PC-9 (cell line): ENCODE measurements at regions of chrX and their contacts with region 1.

Region 1: GRCh38 chrX:150982788-150983520 is at the start of gene HMGB3:
- DNase-seq: peak; percentile 94
- H3K4me3 ChIP-seq: peak within 1 kb of the TSS; percentile 95
- H3K27ac ChIP-seq: no peak within 1 kb of the TSS
- H3K4me1 ChIP-seq: peaks cover 6% of the 10 kb centered on the region
- H3K27me3 ChIP-seq: no peaks in the 10 kb centered on the region
- CTCF ChIP-seq: no peak
- total RNA-seq, gene HMGB3: 133 and 149 TPM in 2 replicates

Region 2: GRCh38 chrX:150568320-150569154 is 414.4 kb before region 1 on chrX and contains the start of gene MTM1:
- CTCF ChIA-PET with region 1: no interaction called
- POLR2A ChIA-PET with region 1: no interaction called
- intact Hi-C with region 1: loop called (anchors 5 kb)
- DNase-seq: peak; percentile 98
- H3K4me3 ChIP-seq: peak within 1 kb of the TSS; percentile 79
- H3K27ac ChIP-seq: no peak within 1 kb of the TSS
- H3K4me1 ChIP-seq: peaks cover 50% of the 10 kb centered on the region
- H3K27me3 ChIP-seq: no peaks in the 10 kb centered on the region
- CTCF ChIP-seq: no peak
- total RNA-seq, gene MTM1: 17.4 and 22.9 TPM in 2 replicates

Region 3: DNA sequence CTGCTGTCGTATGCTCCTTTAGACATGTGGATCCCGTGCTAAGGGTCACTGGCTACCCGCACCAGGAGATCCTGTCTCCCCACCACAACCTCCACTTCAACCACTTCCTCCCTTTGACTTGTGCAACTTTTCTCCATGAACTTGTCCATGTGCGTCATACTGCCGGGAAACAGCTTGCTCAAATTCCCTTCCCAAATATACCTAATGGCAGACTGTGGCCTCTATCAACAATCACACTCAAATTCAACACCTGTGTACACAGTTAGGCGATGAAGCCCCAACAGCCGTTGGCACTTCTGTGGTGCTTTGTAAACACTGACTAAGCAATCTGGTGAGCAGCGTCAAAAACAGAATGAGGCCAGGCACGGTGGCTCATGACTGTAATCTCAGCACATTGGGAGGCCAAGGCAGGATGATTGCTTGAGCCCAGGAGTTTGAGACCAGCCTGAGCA is 134.0 kb before region 1 on chrX:
- CTCF ChIA-PET with region 1: no interaction called
- POLR2A ChIA-PET with region 1: no interaction called
- intact Hi-C with region 1: loop called (anchors 2 kb)
- DNase-seq: peak; percentile 39 to 63
- H3K4me3 ChIP-seq: no peak overlapping the region
- H3K27ac ChIP-seq: no peak overlapping the region
- H3K4me1 ChIP-seq: peaks cover 10% of the 10 kb centered on the region
- H3K27me3 ChIP-seq: no peaks in the 10 kb centered on the region
- CTCF ChIP-seq: no peak

Region 4: DNA sequence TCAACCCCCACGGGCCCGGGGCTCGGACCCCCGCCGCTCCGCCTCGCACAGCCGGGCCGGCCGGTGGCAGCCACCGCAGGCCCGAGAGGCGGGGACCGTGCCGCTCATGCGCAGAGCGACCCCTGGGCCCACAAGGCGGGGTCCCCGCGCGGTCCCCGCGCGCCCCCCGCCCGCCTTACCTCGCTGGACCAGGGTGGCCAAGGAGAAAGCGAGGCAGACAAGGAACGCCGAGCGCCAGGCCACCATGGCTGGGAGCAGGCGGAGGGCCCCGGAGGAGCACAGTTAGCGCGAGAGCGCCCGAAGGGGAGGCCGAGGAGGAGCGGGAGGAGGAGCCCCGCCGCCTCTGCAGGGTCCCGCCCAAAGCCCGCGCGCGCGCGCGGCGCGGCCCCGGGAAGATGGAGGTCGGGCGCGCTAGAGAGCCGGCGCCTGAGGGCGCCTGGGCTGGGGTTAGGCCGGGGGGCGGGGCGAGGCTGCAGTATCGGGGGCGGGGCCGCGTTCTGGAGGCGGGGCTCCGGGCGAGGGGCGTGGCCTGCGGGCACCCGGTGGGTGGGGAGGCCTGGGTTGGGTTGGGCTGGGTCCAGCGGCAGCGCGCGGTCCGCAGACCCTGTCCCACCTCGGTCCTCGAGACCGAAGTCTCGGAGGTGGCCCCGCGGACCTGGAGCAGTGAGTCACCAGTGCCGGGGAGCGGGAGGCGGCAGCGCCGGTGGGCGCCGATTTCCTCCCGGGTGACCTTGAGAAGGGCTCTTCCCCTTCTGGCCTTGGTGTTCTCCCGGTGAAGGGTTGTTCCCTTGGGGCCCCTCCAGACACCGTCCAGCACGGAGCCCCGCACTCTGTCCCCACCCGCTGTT is 84.4 kb before region 1 on chrX and contains the start of gene CD99L2:
- CTCF ChIA-PET with region 1: no interaction called
- POLR2A ChIA-PET with region 1: no interaction called
- intact Hi-C with region 1: loop called (anchors 1 kb)
- DNase-seq: peak; percentile 81 to 95
- H3K4me3 ChIP-seq: peak within 1 kb of the TSS; percentile 83
- H3K27ac ChIP-seq: no peak within 1 kb of the TSS
- H3K4me1 ChIP-seq: peaks cover 7% of the 10 kb centered on the region
- H3K27me3 ChIP-seq: peaks cover 5% of the 10 kb centered on the region
- CTCF ChIP-seq: no peak
- total RNA-seq, gene CD99L2: 22.5 and 29.6 TPM in 2 replicates

Region 5: DNA sequence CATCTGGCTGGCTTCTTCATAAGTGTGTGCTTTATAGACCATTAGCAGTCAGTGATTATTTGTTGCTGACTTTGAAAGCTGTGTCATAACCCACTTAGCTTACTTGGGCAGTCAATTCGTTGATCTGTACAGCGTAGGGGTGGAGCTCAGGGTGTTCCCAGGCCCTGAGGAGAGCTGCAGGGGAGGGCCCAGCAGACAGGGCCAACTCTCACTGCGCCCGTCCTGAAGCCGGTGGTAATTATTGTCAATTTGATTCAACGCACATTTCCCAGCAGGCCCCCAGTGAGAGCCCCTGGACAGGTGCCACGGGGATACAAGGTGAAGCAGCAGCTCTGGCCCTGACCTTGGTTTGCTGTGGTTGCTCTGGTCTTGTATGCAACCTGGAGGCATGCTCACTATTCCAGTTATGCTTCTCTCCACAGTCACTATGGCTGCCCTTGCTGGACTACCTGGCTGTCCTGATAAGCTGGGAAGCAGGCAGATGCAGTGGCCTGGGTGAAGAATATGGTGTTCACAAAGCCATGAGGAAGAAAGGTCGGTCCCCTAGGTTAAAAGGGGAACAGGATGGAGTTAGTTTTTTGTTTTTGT is 39.9 kb before region 1 on chrX:
- CTCF ChIA-PET with region 1: no interaction called
- POLR2A ChIA-PET with region 1: no interaction called
- intact Hi-C with region 1: no loop called
- DNase-seq: no peak
- H3K4me3 ChIP-seq: no peak overlapping the region
- H3K27ac ChIP-seq: no peak overlapping the region
- H3K4me1 ChIP-seq: no peaks in the 10 kb centered on the region
- H3K27me3 ChIP-seq: peaks cover 45% of the 10 kb centered on the region
- CTCF ChIP-seq: no peak

Region 6: DNA sequence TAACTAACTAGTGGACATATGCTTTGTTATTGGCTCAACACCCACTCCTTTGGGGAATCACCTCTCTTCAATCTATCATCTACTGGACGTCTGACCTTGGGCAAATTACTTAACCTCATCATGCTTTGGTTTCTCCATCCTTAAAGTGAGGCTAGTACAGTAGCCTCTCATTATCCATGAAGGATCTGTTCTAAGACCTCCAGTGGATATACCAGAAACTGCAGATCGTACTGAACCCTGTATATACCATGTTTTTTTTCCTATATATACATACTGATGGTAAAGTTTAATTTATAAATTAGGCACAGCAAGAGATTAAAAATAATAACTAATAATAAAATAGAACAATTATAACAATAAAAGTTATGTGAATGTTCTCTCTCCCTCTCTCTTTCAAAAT is 56.4 kb after region 1 on chrX:
- CTCF ChIA-PET with region 1: no interaction called
- POLR2A ChIA-PET with region 1: no interaction called
- intact Hi-C with region 1: no loop called
- DNase-seq: no peak
- H3K4me3 ChIP-seq: no peak overlapping the region
- H3K27ac ChIP-seq: no peak overlapping the region
- H3K4me1 ChIP-seq: no peaks in the 10 kb centered on the region
- H3K27me3 ChIP-seq: peaks cover 62% of the 10 kb centered on the region
- CTCF ChIP-seq: no peak

Region 7: DNA sequence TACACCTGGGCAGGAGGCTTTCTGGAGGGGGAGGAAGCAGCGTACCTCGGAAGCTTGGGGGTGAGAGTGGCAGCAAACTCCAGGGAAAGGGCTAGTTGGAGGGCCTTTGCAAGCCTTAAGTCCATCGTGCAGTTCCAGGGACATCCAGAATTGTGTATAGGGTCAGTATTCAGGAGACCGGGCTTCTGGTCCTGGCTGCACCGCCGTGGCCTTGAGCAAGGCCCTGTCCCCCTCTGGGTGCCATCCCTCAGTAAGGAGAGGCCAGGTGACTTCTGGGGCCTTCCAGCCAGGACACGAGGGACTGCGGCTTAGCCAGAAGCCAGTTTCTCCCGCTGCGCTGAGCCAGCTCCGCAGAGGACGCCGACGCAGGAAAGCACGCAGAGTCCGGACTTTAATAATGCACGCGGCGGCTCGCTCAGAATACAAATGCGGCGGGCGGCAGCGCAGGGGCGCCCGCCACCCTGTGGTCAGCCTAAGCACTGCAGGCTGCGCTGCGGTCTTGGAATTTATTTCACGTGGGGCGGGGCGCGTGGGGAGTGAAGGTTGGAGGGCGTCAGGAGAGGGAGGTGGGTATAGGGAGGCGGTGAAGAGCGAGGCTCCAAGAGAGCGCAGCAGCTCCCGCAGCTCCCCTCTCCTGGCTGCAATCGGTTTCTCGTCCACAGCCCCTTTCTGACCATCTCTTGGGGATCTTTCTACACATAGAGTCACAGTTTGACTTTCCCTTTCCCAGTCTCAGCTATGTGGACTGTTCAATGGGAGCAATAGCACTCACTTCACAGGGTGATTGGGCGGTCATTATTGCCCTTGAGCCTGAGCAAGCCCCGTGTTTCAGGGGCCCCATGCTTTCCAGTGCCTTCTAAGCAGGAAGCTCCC is 99.4 kb after region 1 on chrX:
- CTCF ChIA-PET with region 1: interaction called, 4 read pairs
- POLR2A ChIA-PET with region 1: no interaction called
- intact Hi-C with region 1: loop called (anchors 2 kb)
- DNase-seq: peak; percentile 40 to 68
- H3K4me3 ChIP-seq: no peak overlapping the region
- H3K27ac ChIP-seq: no peak overlapping the region
- H3K4me1 ChIP-seq: no peaks in the 10 kb centered on the region
- H3K27me3 ChIP-seq: peaks cover 81% of the 10 kb centered on the region
- CTCF ChIP-seq: peak; percentile 99

Region 8: DNA sequence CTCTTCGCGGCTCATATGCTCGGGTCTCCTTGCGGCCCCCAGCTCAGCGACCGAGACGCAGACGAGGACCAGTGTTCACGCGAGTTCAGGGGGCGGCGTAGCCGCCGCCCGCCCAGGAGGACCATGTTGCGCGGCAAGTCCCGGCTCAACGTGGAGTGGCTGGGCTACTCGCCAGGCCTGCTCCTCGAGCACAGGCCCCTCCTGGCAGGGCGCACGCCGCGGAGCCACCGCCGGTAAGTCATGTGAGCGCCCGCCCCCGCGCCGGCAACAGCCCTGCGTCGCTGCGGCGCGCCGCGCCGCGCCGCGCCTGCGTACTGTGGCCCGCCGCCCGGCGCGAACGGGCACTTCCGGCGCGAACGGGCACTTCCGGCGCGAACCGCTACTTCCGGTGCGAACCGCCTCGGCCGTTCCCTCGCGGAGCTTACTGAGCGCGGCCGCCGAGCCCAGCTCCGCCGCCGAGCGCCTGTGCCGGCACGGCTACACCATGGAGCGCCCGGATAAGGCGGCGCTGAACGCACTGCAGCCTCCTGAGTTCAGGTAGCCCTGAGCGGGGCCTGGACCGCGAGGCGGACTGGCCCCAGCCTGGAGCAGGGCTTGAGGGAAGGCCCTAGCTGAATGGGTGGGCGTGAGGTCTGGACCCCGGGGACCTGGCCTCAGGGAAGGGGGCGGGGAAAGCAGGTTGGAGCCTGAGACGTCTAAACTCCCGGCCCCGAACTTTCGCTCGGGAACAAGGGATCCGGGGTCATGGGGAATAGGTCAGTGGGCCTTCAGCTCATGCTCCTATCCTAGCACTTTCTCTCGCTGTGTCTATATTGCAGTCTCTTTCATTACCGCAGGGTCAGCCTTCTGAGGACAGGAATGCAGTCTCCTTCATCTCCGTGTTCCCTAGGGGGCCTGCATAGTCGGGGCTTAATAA is 414.1 kb after region 1 on chrX and contains the start of gene VMA21:
- CTCF ChIA-PET with region 1: no interaction called
- POLR2A ChIA-PET with region 1: no interaction called
- intact Hi-C with region 1: loop called (anchors 1 kb)
- DNase-seq: peak; percentile 81 to 89
- H3K4me3 ChIP-seq: peak within 1 kb of the TSS; percentile 97
- H3K27ac ChIP-seq: peak within 1 kb of the TSS; percentile 82
- H3K4me1 ChIP-seq: peaks cover 40% of the 10 kb centered on the region
- H3K27me3 ChIP-seq: no peaks in the 10 kb centered on the region
- CTCF ChIP-seq: no peak
- total RNA-seq, gene VMA21: 36.8 and 58.4 TPM in 2 replicates